Heart left ventricle (tissue), 16 donors: ENCODE measurements at regions of chr6 and their contacts with region 1.

Region 1: DNA sequence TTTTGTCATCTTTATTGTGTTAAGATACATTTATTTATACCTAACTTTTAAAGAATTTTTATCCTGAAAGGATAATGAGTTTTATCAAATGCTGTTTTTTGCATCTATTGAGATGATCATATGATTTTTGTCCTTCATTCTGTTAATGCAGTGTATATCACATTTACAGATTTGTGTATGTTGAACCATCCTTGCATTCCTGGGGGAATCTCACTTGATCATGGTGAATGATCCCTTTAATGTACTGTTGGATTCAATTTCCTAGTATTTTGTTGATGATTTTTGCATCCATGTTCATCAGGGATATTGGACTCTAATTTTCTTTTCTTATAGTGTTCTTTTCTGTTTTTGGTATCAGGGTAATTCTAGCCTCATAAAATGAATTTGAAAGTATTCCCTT is 38.5 kb upstream of the SLC22A3 start:
- DNase-seq: no peak
- ATAC-seq: no peak
- H3K4me3 ChIP-seq: no peak overlapping the region
- H3K27ac ChIP-seq: no peak overlapping the region
- H3K4me1 ChIP-seq: no peaks in the 10 kb centered on the region
- H3K27me3 ChIP-seq: no peaks in the 10 kb centered on the region
- CTCF ChIP-seq: no peak
- POLR2A ChIP-seq: no peak

Region 2: DNA sequence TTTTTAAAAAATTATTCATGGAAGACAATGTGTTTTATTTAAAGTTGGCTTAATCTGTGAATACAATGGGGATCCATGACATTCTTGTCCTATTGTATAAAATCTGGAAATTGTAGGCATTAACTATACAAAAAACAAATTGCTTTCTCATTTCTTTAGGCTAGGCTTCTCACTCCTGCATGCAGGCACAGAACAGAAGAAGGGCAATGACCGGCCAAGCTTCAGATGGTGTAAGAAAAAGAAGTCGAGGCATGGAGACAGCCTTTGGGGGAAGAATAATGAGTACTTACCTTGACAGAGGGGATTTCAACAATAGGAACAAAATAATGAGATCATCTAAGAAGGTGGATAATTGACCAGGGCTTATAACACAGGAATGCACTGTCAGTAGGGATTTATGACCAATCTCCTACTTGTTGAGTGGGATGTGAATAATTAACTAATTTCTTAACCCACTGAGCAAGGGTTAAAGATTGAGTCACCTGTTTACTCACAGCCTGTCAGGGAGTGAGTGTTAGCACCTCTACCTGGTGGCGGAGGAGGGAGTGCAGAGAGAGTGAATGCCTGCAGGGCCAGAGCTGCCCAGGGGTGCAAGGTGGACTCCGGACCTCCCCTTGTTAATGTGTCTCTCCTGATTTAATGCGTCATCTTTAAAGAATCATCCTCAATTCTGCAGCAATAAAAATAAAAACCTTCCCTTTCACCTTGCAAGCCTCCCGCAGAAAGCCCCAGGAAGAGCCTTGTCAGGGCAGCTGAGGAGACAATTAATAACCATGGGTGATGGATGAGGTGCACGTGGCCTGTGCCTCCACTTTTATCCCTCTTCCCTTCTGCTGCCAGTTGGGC is 55.0 kb before region 1 on chr6:
- intact Hi-C with region 1: no loop called
- DNase-seq: no peak
- ATAC-seq: no peak
- H3K4me3 ChIP-seq: no peak overlapping the region
- H3K27ac ChIP-seq: no peak overlapping the region
- H3K4me1 ChIP-seq: no peaks in the 10 kb centered on the region
- H3K27me3 ChIP-seq: peaks cover 0 to 7% (median 0%) of the 10 kb centered on the region in 9 donors
- CTCF ChIP-seq: no peak
- POLR2A ChIP-seq: no peak

Region 3: DNA sequence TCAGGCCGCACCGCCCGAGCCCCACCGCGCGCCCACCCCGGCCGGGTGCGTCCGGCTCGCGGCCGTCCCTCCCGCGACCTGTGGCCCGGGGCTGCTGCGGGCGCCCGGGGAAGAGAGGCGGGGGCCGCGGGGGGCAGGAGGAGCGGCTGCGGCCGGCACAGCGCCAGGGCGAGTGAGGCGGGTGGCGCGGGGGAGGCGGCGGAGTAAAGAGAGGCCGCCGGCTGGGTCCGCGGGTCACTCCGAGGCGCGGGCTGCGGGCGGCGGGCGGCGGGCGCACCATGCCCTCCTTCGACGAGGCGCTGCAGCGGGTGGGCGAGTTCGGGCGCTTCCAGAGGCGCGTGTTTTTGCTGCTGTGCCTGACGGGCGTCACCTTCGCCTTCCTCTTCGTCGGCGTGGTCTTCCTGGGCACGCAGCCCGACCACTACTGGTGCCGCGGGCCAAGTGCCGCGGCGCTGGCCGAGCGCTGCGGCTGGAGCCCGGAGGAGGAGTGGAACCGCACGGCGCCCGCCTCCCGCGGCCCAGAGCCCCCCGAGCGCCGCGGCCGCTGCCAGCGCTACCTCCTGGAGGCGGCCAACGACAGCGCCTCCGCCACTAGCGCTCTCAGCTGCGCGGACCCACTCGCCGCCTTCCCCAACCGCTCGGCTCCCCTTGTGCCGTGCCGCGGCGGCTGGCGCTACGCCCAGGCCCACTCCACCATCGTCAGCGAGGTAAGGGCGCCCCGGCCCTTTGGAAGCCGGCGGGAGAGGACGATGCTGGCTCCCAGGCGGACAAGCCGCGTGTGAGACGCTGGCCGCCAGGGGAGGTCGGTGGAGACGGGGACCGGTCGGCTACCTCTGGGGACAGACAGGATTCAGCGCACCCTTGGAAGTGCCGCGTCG is 38.7 kb after region 1 on chr6 and contains the start of gene SLC22A3:
- intact Hi-C with region 1: loop called in 1 of 10 experiments (anchors 2 kb)
- DNase-seq: peak in 2 of 5 donors; percentile 35 to 60
- ATAC-seq: peak in 3 of 4 donors; percentile 44 to 81 (median 53)
- H3K4me3 ChIP-seq: peak within 1 kb of the TSS; percentile 43 to 65 (median 51)
- H3K27ac ChIP-seq: peak within 1 kb of the TSS in 6 of 12 donors; percentile 9 to 87 (median 38)
- H3K4me1 ChIP-seq: peaks cover 0 to 19% (median 0%) of the 10 kb centered on the region in 12 donors
- H3K27me3 ChIP-seq: peaks cover 0 to 46% (median 11%) of the 10 kb centered on the region in 9 donors
- CTCF ChIP-seq: peak in 1 of 12 donors; percentile 9
- POLR2A ChIP-seq: no peak
- total RNA-seq, gene SLC22A3: 0.45 to 3.0 (median 0.75) TPM